ENCODE measurements at regions of chr2 and their contacts with region 1.

Region 1: GRCh38 chr2:36461039-36461681 is 105.6 kb downstream of the CRIM1 start:
- DNase-seq: peak; percentile 88
- H3K4me3 ChIP-seq: no peak overlapping the region
- H3K27ac ChIP-seq: peak overlapping the region; percentile 83
- H3K4me1 ChIP-seq: peaks cover 43% of the 10 kb centered on the region
- H3K27me3 ChIP-seq: no peaks in the 10 kb centered on the region
- CTCF ChIP-seq: no peak

Region 2: GRCh38 chr2:36367895-36368353 is 93.2 kb before region 1 on chr2:
- CTCF ChIA-PET with region 1: no interaction called
- dilution Hi-C with region 1: no loop called
- in situ Hi-C with region 1: loop called in 1 of 2 experiments (anchors 10 kb)
- intact Hi-C with region 1: loop called (anchors 5 kb)
- DNase-seq: peak; percentile 84
- H3K4me3 ChIP-seq: peak overlapping the region; percentile 25 to 37 (median 33)
- H3K27ac ChIP-seq: peak overlapping the region; percentile 84
- H3K4me1 ChIP-seq: peaks cover 91% of the 10 kb centered on the region
- H3K27me3 ChIP-seq: no peaks in the 10 kb centered on the region
- CTCF ChIP-seq: peak in 1 of 2 donors; percentile 8

Region 3: GRCh38 chr2:36433311-36434217 is 27.6 kb before region 1 on chr2:
- CTCF ChIA-PET with region 1: no interaction called
- dilution Hi-C with region 1: no loop called
- in situ Hi-C with region 1: no loop called
- intact Hi-C with region 1: loop called (anchors 1 kb)
- DNase-seq: peak; percentile 88
- H3K4me3 ChIP-seq: peak overlapping the region in 2 of 3 experiments; percentile 32 to 33
- H3K27ac ChIP-seq: peak overlapping the region; percentile 81
- H3K4me1 ChIP-seq: peaks cover 32% of the 10 kb centered on the region
- H3K27me3 ChIP-seq: no peaks in the 10 kb centered on the region
- CTCF ChIP-seq: no peak

Region 4: GRCh38 chr2:36486546-36487044 is 25.4 kb after region 1 on chr2:
- CTCF ChIA-PET with region 1: no interaction called
- dilution Hi-C with region 1: no loop called
- in situ Hi-C with region 1: no loop called
- intact Hi-C with region 1: loop called (anchors 1 kb)
- DNase-seq: peak; percentile 16
- H3K4me3 ChIP-seq: no peak overlapping the region
- H3K27ac ChIP-seq: peak overlapping the region; percentile 64
- H3K4me1 ChIP-seq: peaks cover 51% of the 10 kb centered on the region
- H3K27me3 ChIP-seq: no peaks in the 10 kb centered on the region
- CTCF ChIP-seq: no peak

Region 5: DNA sequence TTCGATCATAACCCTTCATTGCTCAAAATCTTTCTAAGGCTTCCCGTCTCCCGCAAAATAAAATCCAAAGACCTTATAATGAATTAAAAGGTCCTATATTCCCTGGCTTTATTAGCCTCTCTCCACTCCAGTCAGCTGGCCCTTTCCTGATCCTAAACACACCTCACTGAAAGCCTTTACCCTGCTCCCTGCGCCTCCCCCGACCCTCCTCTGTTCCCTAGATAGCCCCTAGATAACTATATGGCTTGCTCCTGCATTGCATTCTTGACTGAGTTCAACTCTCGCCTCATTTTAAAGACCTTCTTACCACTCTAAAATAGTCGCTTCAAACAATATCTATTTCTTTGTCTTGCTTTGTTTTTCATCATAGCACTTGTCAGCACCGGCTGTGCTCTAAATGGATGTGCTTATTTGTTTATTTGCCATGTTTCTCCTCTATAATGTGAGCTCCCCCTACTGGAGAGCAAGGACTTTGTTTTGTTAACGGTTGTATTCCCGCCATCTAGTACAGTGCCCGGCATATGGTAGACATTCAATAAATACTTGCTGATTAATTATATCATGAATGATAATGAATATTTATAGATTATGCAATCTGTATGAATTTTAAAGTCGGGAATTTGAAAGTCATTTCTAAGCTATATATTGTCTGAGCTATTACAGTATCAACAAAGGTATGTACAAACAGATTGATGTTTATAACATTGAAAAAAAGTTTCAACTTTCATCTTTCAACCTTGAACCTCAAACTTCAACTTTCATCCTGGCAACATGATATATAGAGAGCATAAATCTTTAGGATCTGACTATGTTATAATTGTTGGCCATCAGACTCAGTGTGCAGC is 202.9 kb after region 1 on chr2:
- CTCF ChIA-PET with region 1: no interaction called
- dilution Hi-C with region 1: no loop called
- in situ Hi-C with region 1: no loop called
- intact Hi-C with region 1: loop called (anchors 5 kb)
- DNase-seq: peak; percentile 49
- H3K4me3 ChIP-seq: no peak overlapping the region
- H3K27ac ChIP-seq: no peak overlapping the region
- H3K4me1 ChIP-seq: no peaks in the 10 kb centered on the region
- H3K27me3 ChIP-seq: no peaks in the 10 kb centered on the region
- CTCF ChIP-seq: peak; percentile 63 to 76

Measured in mammary epithelial cell (primary cell).